Aorta (tissue), 5 donors: ENCODE measurements at regions of chr20 and their contacts with region 1.

Region 1: DNA sequence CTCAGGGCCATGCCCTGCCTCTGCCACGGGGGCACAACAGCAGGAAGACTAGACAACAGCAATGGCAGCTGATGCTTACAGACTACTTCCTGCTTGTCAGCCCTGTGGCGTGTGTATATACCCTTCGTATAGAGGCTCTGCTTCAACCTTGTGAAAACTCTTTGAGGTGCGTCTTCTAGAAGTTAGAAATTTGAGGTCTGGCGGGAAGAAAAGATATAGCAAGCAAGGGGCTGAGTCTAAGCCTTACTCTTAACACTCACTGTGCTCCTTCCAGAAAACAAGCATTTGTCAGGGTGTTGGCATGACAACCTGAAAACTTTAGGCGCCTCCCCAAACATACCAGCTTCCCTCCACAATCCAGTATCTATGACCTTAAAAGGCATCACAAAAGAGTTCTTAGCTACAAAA is 33.3 kb downstream of the JPH2 start:
- DNase-seq: peak in 1 of 2 donors; percentile 65
- ATAC-seq: peak; percentile 71
- H3K4me3 ChIP-seq: no peak overlapping the region
- H3K27ac ChIP-seq: peak overlapping the region; percentile 95 to 96
- H3K4me1 ChIP-seq: peaks cover 3% of the 10 kb centered on the region in 2 donors
- H3K27me3 ChIP-seq: no peaks in the 10 kb centered on the region

Region 2: GRCh38 chr20:44057698-44058675 is 95.7 kb before region 1 on chr20:
- intact Hi-C with region 1: no loop called
- DNase-seq: peak in 1 of 2 donors; percentile 18
- ATAC-seq: no peak
- H3K4me3 ChIP-seq: no peak overlapping the region
- H3K27ac ChIP-seq: no peak overlapping the region
- H3K4me1 ChIP-seq: no peaks in the 10 kb centered on the region
- H3K27me3 ChIP-seq: no peaks in the 10 kb centered on the region

Region 3: GRCh38 chr20:44319756-44320422 is 166.2 kb after region 1 on chr20:
- intact Hi-C with region 1: no loop called
- DNase-seq: no peak
- ATAC-seq: no peak
- H3K4me3 ChIP-seq: no peak overlapping the region
- H3K27ac ChIP-seq: no peak overlapping the region
- H3K4me1 ChIP-seq: no peaks in the 10 kb centered on the region
- H3K27me3 ChIP-seq: no peaks in the 10 kb centered on the region

Region 4: GRCh38 chr20:44598423-44599305 is 445.0 kb after region 1 on chr20:
- intact Hi-C with region 1: loop called in 1 of 2 experiments (anchors 10 kb)
- DNase-seq: peak in 1 of 2 donors; percentile 74
- ATAC-seq: no peak
- H3K4me3 ChIP-seq: no peak overlapping the region
- H3K27ac ChIP-seq: peak overlapping the region; percentile 78 to 91
- H3K4me1 ChIP-seq: peaks cover 12 to 19% of the 10 kb centered on the region in 2 donors
- H3K27me3 ChIP-seq: no peaks in the 10 kb centered on the region